H1 (cell line): ENCODE measurements at regions of chr1 and their contacts with region 1.

Region 1: GRCh38 chr1:153352523-153352922 is 3.9 kb upstream of the PGLYRP4 start:
- DNase-seq: peak in 1 of 2 experiments; percentile 65
- H3K4me3 ChIP-seq: no peak overlapping the region
- H3K27ac ChIP-seq: no peak overlapping the region
- H3K4me1 ChIP-seq: no peaks in the 10 kb centered on the region; a peak in 1 of 7 replicates
- H3K27me3 ChIP-seq: no peaks in the 10 kb centered on the region
- CTCF ChIP-seq: peak; percentile 84 to 85 (median 84)
- EP300 ChIP-seq: no peak
- POLR2A ChIP-seq: no peak
- RAD21 ChIP-seq: peak; percentile 91 to 92

Region 2: GRCh38 chr1:153040950-153041631 is 311.4 kb before region 1 on chr1 and contains the start of gene SPRR2D:
- CTCF ChIA-PET with region 1: no interaction called
- POLR2A ChIA-PET with region 1: no interaction called
- DNase-seq: no peak
- H3K4me3 ChIP-seq: no peak within 1 kb of the TSS
- H3K27ac ChIP-seq: no peak within 1 kb of the TSS
- H3K4me1 ChIP-seq: no peaks in the 10 kb centered on the region
- H3K27me3 ChIP-seq: no peaks in the 10 kb centered on the region
- CTCF ChIP-seq: no peak
- EP300 ChIP-seq: no peak
- POLR2A ChIP-seq: no peak
- RAD21 ChIP-seq: no peak
- total RNA-seq, gene SPRR2D: not detected in 2 replicates

Region 3: DNA sequence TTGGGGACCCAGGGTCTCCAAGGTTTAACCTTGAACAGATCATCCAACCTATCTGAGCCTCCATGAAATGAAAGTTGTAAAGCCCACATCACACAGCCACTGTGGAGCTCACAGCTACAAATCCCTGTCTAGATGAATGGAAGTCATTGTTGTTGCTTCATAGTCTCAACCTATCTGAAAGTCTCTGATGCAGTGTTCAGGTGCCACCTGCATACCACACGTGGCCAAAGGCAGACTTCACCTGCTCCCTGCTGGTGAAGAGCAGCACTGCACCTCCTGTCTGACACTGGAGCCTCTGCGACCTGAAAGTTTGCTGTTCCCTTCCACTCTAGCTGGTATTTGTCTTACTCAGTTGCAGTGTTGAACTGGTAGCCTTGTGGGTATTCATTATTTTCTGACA is 74.7 kb before region 1 on chr1:
- CTCF ChIA-PET with region 1: no interaction called
- POLR2A ChIA-PET with region 1: no interaction called
- DNase-seq: peak in 1 of 2 experiments; percentile 83
- H3K4me3 ChIP-seq: no peak overlapping the region
- H3K27ac ChIP-seq: no peak overlapping the region
- H3K4me1 ChIP-seq: no peaks in the 10 kb centered on the region
- H3K27me3 ChIP-seq: no peaks in the 10 kb centered on the region; a peak in 1 of 7 replicates
- CTCF ChIP-seq: peak; percentile 87 to 99 (median 96)
- EP300 ChIP-seq: no peak
- POLR2A ChIP-seq: no peak
- RAD21 ChIP-seq: peak; percentile 82 to 84

Region 4: GRCh38 chr1:153365303-153366095 is 13.0 kb after region 1 on chr1:
- CTCF ChIA-PET with region 1: interaction called, 19 read pairs
- POLR2A ChIA-PET with region 1: no interaction called
- DNase-seq: no peak
- H3K4me3 ChIP-seq: no peak overlapping the region
- H3K27ac ChIP-seq: no peak overlapping the region
- H3K4me1 ChIP-seq: no peaks in the 10 kb centered on the region
- H3K27me3 ChIP-seq: no peaks in the 10 kb centered on the region
- CTCF ChIP-seq: no peak
- EP300 ChIP-seq: no peak
- POLR2A ChIP-seq: no peak
- RAD21 ChIP-seq: no peak

Region 5: GRCh38 chr1:153404768-153405167 is 52.2 kb after region 1 on chr1:
- CTCF ChIA-PET with region 1: interaction called, 63 read pairs
- POLR2A ChIA-PET with region 1: interaction called, 4 read pairs
- DNase-seq: peak; percentile 19 to 86
- H3K4me3 ChIP-seq: no peak overlapping the region
- H3K27ac ChIP-seq: no peak overlapping the region
- H3K4me1 ChIP-seq: no peaks in the 10 kb centered on the region; a peak in 1 of 7 replicates
- H3K27me3 ChIP-seq: peaks cover 0 to 11% (median 8%) of the 10 kb centered on the region in 4 experiments; a peak in 6 of 7 replicates
- CTCF ChIP-seq: peak; percentile 81 to 90 (median 84)
- EP300 ChIP-seq: no peak
- POLR2A ChIP-seq: no peak
- RAD21 ChIP-seq: peak; percentile 31 to 59

Region 6: DNA sequence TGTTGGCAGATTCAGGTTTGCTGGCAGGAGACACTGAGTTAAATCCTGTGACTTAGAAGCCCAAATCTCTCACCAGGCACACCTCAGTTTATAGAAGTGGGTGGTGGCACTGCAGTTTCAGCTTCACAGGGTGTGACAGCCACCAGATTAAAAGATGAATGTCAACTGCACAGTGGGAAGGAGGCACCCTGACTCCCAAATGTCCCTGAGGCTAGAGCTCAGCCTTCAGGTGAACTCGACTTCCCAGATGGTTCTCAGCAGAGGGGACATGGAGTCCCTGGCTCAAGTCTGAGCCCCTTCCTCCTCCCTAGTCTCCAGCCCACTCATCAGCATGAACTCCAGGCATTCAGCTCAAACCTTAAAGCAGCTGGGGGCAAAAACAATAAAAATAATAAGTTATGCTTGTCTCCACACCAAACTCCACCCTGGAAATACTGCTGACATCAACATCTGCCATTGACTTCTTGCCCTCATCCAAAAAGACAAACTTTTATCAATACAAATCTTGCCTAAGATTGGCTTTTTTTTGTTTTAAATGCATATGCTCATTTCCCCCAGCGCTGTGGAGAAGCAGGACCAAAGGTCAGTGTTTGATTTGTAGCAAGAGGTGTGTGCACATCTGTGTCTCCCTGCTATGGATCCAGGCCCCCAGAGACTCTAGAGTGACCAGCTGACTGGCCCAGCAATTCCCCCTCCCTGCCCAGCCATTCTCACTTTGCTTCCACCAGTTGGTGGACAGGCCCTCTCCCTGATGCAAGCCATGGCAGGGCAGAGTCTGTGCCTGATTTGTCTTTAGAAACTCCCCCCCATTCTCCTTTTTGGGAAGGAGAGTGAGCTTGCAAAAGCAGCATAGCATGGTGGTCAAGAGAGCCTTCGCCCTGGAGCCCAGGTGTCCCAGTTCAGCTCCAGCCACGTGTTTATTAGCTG is 126.4 kb after region 1 on chr1:
- CTCF ChIA-PET with region 1: interaction called, 360 read pairs
- POLR2A ChIA-PET with region 1: no interaction called
- DNase-seq: no peak
- H3K4me3 ChIP-seq: no peak overlapping the region
- H3K27ac ChIP-seq: no peak overlapping the region
- H3K4me1 ChIP-seq: peaks cover 0 to 11% (median 0%) of the 10 kb centered on the region in 4 experiments; a peak in 2 of 7 replicates
- H3K27me3 ChIP-seq: no peaks in the 10 kb centered on the region
- CTCF ChIP-seq: no peak
- EP300 ChIP-seq: no peak
- POLR2A ChIP-seq: no peak
- RAD21 ChIP-seq: no peak

Region 7: GRCh38 chr1:153532769-153533599 is 180.5 kb after region 1 on chr1:
- CTCF ChIA-PET with region 1: interaction called, 17 read pairs
- POLR2A ChIA-PET with region 1: no interaction called
- DNase-seq: peak; percentile 87 to 96
- H3K4me3 ChIP-seq: peak overlapping the region; percentile 12 to 54 (median 38); a peak in 7 of 8 replicates
- H3K27ac ChIP-seq: no peak overlapping the region
- H3K4me1 ChIP-seq: peaks cover 8 to 35% (median 21%) of the 10 kb centered on the region in 4 experiments
- H3K27me3 ChIP-seq: peaks cover 0 to 19% (median 6%) of the 10 kb centered on the region in 4 experiments; a peak in 5 of 7 replicates
- CTCF ChIP-seq: peak; percentile 85 to 93 (median 86)
- EP300 ChIP-seq: no peak
- POLR2A ChIP-seq: no peak
- RAD21 ChIP-seq: peak; percentile 78 to 92

Region 8: GRCh38 chr1:153642161-153642560 is 289.6 kb after region 1 on chr1:
- CTCF ChIA-PET with region 1: no interaction called
- POLR2A ChIA-PET with region 1: no interaction called
- DNase-seq: no peak
- H3K4me3 ChIP-seq: no peak overlapping the region
- H3K27ac ChIP-seq: no peak overlapping the region
- H3K4me1 ChIP-seq: no peaks in the 10 kb centered on the region
- H3K27me3 ChIP-seq: no peaks in the 10 kb centered on the region
- CTCF ChIP-seq: no peak
- EP300 ChIP-seq: no peak
- POLR2A ChIP-seq: no peak
- RAD21 ChIP-seq: no peak